ENCODE measurements at regions of chr19 and their contacts with region 1.

Region 1: DNA sequence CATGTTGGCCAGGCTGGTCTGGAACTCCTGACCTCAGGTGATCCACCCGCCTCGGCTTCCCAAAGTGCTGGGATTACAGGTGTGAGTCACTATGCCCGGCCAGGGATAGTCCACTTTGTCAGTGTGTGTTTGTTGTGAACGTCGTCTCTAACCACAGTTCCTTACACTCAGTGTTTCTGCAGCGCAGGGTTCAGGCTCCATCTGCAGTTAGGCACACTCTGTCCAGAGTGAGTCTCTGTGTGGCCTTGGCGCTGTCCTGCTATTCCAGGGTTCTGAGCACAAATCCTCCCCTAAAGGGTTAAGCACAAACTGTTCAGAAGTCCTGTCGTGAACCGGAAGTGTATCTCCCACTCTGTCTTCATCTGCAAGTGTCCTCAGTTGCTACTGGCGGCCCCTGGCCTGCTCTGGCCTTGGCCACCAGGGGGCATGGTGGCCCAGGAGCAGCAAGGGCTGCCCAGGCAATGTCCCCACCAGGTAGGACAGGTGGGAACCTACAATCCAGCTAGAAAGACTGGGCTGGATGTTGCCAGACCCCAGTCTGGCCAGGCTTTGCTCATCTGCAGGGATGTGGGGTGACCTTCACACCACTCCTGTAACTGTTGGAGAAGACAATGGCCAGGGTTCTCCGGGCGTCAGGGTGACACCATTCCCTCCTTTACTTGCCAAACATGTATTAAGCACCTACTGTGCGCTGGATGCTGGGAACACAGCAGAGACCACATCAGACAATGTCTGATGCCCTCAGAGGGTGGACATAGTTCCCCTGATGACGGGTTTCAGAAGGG is 38.7 kb upstream of the GATAD2A start:
- DNase-seq: peak; percentile 62
- H3K4me3 ChIP-seq: no peak overlapping the region
- H3K27ac ChIP-seq: no peak overlapping the region
- H3K4me1 ChIP-seq: no peaks in the 10 kb centered on the region
- H3K27me3 ChIP-seq: no peaks in the 10 kb centered on the region
- CTCF ChIP-seq: peak; percentile 89 to 98 (median 96)
- POLR2A ChIP-seq: no peak

Region 2: DNA sequence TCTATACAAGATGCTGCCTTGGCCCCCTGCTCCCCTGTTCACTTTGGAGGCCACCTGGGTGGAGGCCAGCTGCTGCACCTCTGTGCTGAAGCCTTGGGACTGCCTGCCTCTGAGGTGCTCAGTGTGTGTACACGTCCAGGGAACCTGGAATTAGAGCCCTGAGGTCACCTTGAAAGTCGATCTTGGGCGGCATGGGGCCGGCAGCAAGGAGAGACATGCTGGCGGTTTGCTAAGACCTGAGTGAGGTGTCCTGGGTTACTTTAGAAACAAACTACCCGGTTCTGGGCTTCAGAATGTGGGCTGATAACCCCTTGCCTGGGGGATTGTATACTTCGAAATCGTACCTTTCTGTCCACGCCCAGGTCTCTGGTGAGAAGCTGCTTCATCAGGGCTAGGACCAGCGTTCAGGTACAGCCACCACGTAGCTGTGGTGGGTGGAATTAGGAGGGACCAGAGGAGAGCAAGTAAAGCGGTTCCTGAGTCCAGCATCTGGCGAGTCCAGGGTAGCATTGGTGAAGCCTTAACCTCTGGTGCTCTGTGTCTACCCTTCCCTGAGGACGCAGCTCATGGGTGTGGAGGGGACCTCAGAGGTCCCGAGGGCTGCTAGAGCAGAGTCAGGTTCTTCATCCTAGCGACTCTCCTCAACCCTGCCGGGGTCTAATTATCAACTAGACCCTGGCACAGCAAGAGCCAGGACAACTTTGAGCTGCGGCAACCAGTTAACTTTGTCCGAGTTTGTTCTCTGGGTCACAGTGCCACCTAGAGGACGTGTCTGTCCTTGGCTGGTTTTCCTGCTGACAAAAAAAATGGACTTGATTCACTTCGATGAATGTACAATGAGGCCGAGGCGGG is 123.2 kb after region 1 on chr19:
- intact Hi-C with region 1: loop called (anchors 1 kb)
- DNase-seq: peak; percentile 66
- H3K4me3 ChIP-seq: no peak overlapping the region
- H3K27ac ChIP-seq: peak overlapping the region in 1 of 2 donors; percentile 27
- H3K4me1 ChIP-seq: no peaks in the 10 kb centered on the region
- H3K27me3 ChIP-seq: no peaks in the 10 kb centered on the region
- CTCF ChIP-seq: peak; percentile 70 to 86 (median 84)
- POLR2A ChIP-seq: no peak